ENCODE measurements at regions of chr6 and their contacts with region 1.

Region 1: DNA sequence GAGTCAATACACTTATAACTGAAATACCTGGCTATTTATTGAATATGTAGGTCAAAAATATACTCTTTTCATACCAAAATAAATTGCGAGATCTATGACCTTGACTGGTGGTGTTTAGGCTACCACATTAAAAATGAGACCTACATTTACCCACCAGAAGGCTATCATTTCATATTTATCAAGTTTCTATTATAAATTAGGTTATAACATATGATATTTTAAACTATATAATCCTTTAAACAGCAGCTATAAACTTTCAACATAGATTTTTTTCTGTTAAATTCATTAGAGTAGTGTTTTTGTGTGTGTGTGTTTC is 586.1 kb downstream of the HTR1B start:
- DNase-seq: no peak
- H3K4me3 Mint-ChIP-seq: peak overlapping the region; percentile 72
- H3K27ac Mint-ChIP-seq: no peak overlapping the region
- H3K4me1 Mint-ChIP-seq: no peaks in the 10 kb centered on the region
- H3K27me3 Mint-ChIP-seq: no peaks in the 10 kb centered on the region
- CTCF ChIP-seq: no peak

Region 2: DNA sequence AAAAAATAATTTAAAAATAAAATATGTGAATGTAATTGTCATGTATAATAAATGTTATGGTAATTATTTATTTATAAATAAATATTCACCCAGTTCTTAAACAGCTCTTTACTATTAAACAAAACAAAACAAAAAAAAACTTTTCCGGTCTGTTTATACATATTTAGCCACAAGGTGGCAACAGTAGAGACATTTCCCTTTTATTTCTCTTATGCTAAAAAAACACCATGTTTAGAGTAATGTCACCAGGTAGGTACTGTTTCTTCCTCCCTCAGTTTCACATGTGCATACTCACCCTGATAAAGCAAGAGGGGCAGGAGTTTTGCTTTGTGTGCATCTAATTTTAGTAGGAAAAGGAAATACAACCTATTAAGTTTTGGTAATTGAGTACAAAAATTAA is 194.4 kb before region 1 on chr6:
- CTCF ChIA-PET with region 1: interaction called, 4 read pairs
- intact Hi-C with region 1: loop called (anchors 1 kb)
- DNase-seq: no peak
- H3K4me3 Mint-ChIP-seq: no peak overlapping the region
- H3K27ac Mint-ChIP-seq: no peak overlapping the region
- H3K4me1 Mint-ChIP-seq: no peaks in the 10 kb centered on the region
- H3K27me3 Mint-ChIP-seq: no peaks in the 10 kb centered on the region
- CTCF ChIP-seq: peak; percentile 23

Region 3: GRCh38 chr6:76843054-76843822 is 34.0 kb before region 1 on chr6:
- CTCF ChIA-PET with region 1: no interaction called
- intact Hi-C with region 1: no loop called
- DNase-seq: no peak
- H3K4me3 Mint-ChIP-seq: no peak overlapping the region
- H3K27ac Mint-ChIP-seq: no peak overlapping the region
- H3K4me1 Mint-ChIP-seq: no peaks in the 10 kb centered on the region
- H3K27me3 Mint-ChIP-seq: no peaks in the 10 kb centered on the region
- CTCF ChIP-seq: no peak

Measured in Calu3 (cell line).